ENCODE measurements at regions of chr22 and their contacts with region 1.

Region 1: GRCh38 chr22:22848364-22848866 is 39.2 kb upstream of the IGLL5 start:
- DNase-seq: peak; percentile 77
- ATAC-seq: peak; percentile 90
- H3K4me3 Mint-ChIP-seq: no peak overlapping the region
- H3K27ac Mint-ChIP-seq: no peak overlapping the region
- H3K4me1 Mint-ChIP-seq: peaks cover 10% of the 10 kb centered on the region
- H3K27me3 Mint-ChIP-seq: peaks cover 26% of the 10 kb centered on the region

Region 2: GRCh38 chr22:22753526-22754267 is 94.7 kb before region 1 on chr22:
- CTCF ChIA-PET with region 1: interaction called, 21 read pairs
- DNase-seq: peak; percentile 89
- ATAC-seq: peak; percentile 97
- H3K4me3 Mint-ChIP-seq: no peak overlapping the region
- H3K27ac Mint-ChIP-seq: no peak overlapping the region
- H3K4me1 Mint-ChIP-seq: peaks cover 20% of the 10 kb centered on the region
- H3K27me3 Mint-ChIP-seq: no peaks in the 10 kb centered on the region

Region 3: DNA sequence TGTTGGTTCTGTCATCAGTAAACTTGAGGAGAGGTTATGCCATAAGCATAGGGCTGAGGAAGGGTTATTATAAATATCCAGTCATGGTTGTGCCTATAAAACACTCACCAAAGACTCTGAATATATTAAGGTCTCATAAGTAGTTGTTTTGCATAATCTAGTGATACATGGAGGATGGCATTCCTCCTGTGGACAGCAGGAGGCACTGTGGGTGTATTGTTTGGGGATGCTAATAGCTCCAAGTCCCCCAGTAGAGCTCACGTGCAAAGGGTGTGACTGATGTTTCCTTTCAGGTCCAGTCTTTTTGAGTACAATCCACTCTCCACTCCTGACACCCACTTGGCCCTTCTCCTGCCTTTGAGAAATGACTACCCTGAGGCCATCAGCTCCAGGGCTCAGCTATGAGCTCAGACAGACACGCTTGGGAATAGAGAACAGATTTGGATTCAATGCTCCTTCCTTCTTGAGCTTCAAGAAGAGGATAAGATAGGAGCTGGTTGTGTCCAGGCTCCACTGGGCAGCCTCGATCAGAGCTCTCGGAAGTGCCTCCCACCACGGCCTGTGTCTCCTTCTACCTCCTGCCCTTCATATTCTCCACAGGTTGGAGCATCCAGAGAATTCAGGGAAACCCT is 46.0 kb before region 1 on chr22:
- CTCF ChIA-PET with region 1: interaction called, 392 read pairs
- DNase-seq: peak; percentile 60
- ATAC-seq: peak; percentile 36
- H3K4me3 Mint-ChIP-seq: no peak overlapping the region
- H3K27ac Mint-ChIP-seq: no peak overlapping the region
- H3K4me1 Mint-ChIP-seq: peaks cover 4% of the 10 kb centered on the region
- H3K27me3 Mint-ChIP-seq: peaks cover 11% of the 10 kb centered on the region

Region 4: DNA sequence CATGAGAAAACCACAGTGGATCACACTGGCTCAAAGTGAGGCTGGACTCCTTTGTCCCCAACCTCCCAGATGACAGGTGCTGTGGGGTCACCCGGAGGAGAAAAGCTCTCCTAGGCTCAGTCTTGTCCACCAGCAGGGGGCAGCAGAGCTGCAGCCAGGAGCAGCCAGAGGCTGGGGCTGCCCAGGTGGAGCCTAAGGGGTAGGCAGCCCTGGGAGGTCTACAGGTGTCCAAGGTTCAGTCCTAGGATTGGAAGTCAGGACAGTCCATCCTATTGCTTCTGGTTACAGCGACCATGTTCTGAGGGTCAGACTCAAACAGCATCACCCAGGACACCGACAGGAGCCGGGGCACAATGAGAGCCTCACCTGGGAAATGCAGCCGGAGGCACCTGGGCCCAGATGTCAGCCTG is 38.4 kb before region 1 on chr22:
- CTCF ChIA-PET with region 1: interaction called, 392 read pairs
- DNase-seq: peak; percentile 84
- ATAC-seq: peak; percentile 98
- H3K4me3 Mint-ChIP-seq: no peak overlapping the region
- H3K27ac Mint-ChIP-seq: no peak overlapping the region
- H3K4me1 Mint-ChIP-seq: peaks cover 3% of the 10 kb centered on the region
- H3K27me3 Mint-ChIP-seq: peaks cover 17% of the 10 kb centered on the region

Region 5: DNA sequence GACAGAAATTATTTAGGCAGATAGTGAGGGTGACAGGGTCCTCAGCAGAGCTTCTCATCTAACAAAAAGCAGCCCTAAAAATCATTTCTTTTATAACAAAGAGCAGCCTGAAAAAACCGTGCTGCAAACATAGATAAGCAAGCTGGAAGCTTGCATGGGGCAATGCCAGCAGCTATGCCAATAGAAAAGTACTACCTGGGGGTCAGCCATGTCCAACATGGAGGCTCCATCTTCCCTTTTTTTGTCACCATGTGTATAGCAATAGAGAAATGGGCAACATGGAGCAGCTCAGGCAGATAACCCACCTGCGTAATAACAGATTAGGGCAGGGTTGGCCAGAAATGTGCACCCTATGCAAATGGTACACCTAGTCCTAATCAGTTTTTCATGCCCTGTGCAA is 18.2 kb before region 1 on chr22:
- CTCF ChIA-PET with region 1: interaction called, 392 read pairs
- DNase-seq: no peak
- ATAC-seq: no peak
- H3K4me3 Mint-ChIP-seq: no peak overlapping the region
- H3K27ac Mint-ChIP-seq: no peak overlapping the region
- H3K4me1 Mint-ChIP-seq: peaks cover under 1% of the 10 kb centered on the region
- H3K27me3 Mint-ChIP-seq: peaks cover 19% of the 10 kb centered on the region

Region 6: DNA sequence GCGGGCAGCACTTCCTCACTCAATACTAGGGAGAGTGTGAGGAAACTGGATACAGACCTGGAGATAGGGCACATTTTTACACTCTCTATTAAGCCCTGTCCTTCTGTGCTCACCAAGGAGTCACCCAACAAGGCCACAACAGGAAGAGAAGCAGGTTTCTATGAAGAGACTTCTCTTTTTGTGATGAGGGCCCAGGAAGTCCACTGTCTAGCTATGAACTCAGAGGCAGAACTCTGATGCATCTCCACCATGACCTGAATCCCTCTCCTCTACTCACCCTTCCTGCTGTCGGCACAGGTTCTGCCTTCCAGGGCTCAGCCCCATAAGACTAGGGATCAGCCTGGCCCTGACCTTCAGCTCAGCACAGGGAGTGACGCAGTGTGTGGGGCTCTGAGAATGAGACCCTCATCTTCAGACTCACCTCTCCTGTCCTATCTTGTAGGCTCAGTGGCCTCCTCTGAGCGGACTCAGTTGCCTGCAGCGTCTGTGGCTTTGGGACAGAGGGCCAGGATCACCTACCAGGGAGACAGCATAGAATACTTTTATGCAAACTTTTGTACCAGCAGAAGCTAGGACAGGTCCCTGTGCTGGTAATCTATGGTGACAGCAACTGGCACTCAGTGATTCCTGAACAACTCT is 10.1 kb before region 1 on chr22:
- CTCF ChIA-PET with region 1: interaction called, 11 read pairs
- DNase-seq: no peak
- ATAC-seq: no peak
- H3K4me3 Mint-ChIP-seq: no peak overlapping the region
- H3K27ac Mint-ChIP-seq: no peak overlapping the region
- H3K4me1 Mint-ChIP-seq: peaks cover 14% of the 10 kb centered on the region
- H3K27me3 Mint-ChIP-seq: peaks cover 9% of the 10 kb centered on the region

Region 7: GRCh38 chr22:22870577-22871404 is 22.4 kb after region 1 on chr22:
- CTCF ChIA-PET with region 1: interaction called, 18 read pairs
- DNase-seq: no peak
- ATAC-seq: no peak
- H3K4me3 Mint-ChIP-seq: no peak overlapping the region
- H3K27ac Mint-ChIP-seq: no peak overlapping the region
- H3K4me1 Mint-ChIP-seq: peaks cover 8% of the 10 kb centered on the region
- H3K27me3 Mint-ChIP-seq: peaks cover 40% of the 10 kb centered on the region

Measured in activated CD8-positive, alpha-beta memory T cell treated with anti-CD3 and anti-CD28 coated beads, Interleukin-2, amount 10 ng/mL, durations not matched to agents 7 days and 5 days (primary cell).